ENCODE measurements at regions of chr1 and their contacts with region 1.

Region 1: DNA sequence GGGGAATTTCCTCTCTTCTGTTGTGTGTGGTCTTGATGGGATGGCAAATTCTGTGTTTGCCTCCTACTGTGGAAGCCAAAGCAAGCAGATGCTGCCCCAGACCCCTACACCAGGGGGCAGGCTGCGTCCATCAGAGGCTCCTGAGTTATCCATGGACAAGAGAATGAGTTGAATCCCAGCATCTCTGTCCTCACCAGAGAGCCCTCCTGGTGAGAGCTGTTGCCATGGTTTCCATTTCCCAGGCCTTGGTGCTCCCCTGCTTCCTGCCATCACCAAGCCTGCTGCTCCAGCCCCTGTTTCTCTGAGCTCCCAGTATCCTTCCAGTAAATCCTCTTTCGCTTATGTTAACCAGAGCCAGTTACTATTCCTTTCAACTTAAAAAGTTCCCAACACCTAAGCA is 20.4 kb upstream of the GNG12 start:
- DNase-seq: no peak
- H3K4me3 ChIP-seq: no peak overlapping the region
- H3K27ac ChIP-seq: no peak overlapping the region
- H3K4me1 ChIP-seq: no peaks in the 10 kb centered on the region
- H3K27me3 ChIP-seq: no peaks in the 10 kb centered on the region
- CTCF ChIP-seq: peak in 3 of 4 experiments; percentile 28 to 53 (median 39)
- POLR2A ChIP-seq: no peak

Region 2: GRCh38 chr1:67674260-67675011 is 179.3 kb before region 1 on chr1:
- intact Hi-C with region 1: no loop called
- DNase-seq: peak; percentile 38
- H3K4me3 ChIP-seq: no peak overlapping the region
- H3K27ac ChIP-seq: no peak overlapping the region
- H3K4me1 ChIP-seq: no peaks in the 10 kb centered on the region
- H3K27me3 ChIP-seq: no peaks in the 10 kb centered on the region
- CTCF ChIP-seq: no peak
- POLR2A ChIP-seq: no peak

Region 3: GRCh38 chr1:68111519-68112436 is 258.1 kb after region 1 on chr1:
- intact Hi-C with region 1: loop called (anchors 5 kb)
- DNase-seq: peak; percentile 32
- H3K4me3 ChIP-seq: no peak overlapping the region
- H3K27ac ChIP-seq: no peak overlapping the region
- H3K4me1 ChIP-seq: no peaks in the 10 kb centered on the region
- H3K27me3 ChIP-seq: no peaks in the 10 kb centered on the region
- CTCF ChIP-seq: peak in 3 of 4 experiments; percentile 32 to 66 (median 50)
- POLR2A ChIP-seq: no peak

Region 4: GRCh38 chr1:68346188-68346808 is 492.6 kb after region 1 on chr1:
- intact Hi-C with region 1: loop called (anchors 5 kb)
- DNase-seq: no peak
- H3K4me3 ChIP-seq: no peak overlapping the region
- H3K27ac ChIP-seq: no peak overlapping the region
- H3K4me1 ChIP-seq: no peaks in the 10 kb centered on the region
- H3K27me3 ChIP-seq: no peaks in the 10 kb centered on the region
- CTCF ChIP-seq: peak in 3 of 4 experiments; percentile 38 to 49 (median 44)
- POLR2A ChIP-seq: no peak

Measured in prostate gland (tissue), 2 donors.